ENCODE measurements at regions of chr13 and their contacts with region 1.

Region 1: GRCh38 chr13:93227878-93228642 is 1.5 kb downstream of the GPC6 start:
- DNase-seq: peak; percentile 95
- H3K4me3 ChIP-seq: peak overlapping the region; percentile 90
- H3K27ac ChIP-seq: peak overlapping the region; percentile 96
- H3K4me1 ChIP-seq: peaks cover 55% of the 10 kb centered on the region
- H3K27me3 ChIP-seq: no peaks in the 10 kb centered on the region
- CTCF ChIP-seq: peak; percentile 67

Region 2: DNA sequence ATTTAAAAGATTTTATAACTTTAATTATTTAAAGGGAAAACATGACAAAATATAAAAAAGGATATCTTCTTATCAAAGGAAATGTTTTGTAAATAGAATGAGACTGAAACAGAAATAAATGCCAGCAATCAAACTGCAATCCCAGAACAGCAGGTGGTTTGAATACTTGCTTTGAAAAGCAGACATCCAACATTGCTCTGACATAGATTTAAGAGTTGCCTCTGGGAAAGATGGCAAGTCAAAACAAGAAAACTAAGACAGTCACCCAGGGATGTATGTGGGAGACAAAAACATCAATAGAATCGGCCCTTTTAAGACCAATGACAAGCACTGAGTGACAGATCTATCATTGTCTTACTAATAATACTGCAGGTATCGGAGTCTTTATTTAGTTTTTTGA is 791.1 kb before region 1 on chr13:
- CTCF ChIA-PET with region 1: no interaction called
- POLR2A ChIA-PET with region 1: no interaction called
- intact Hi-C with region 1: no loop called
- DNase-seq: no peak
- H3K4me3 ChIP-seq: no peak overlapping the region
- H3K27ac ChIP-seq: no peak overlapping the region
- H3K4me1 ChIP-seq: no peaks in the 10 kb centered on the region
- H3K27me3 ChIP-seq: no peaks in the 10 kb centered on the region
- CTCF ChIP-seq: no peak

Region 3: DNA sequence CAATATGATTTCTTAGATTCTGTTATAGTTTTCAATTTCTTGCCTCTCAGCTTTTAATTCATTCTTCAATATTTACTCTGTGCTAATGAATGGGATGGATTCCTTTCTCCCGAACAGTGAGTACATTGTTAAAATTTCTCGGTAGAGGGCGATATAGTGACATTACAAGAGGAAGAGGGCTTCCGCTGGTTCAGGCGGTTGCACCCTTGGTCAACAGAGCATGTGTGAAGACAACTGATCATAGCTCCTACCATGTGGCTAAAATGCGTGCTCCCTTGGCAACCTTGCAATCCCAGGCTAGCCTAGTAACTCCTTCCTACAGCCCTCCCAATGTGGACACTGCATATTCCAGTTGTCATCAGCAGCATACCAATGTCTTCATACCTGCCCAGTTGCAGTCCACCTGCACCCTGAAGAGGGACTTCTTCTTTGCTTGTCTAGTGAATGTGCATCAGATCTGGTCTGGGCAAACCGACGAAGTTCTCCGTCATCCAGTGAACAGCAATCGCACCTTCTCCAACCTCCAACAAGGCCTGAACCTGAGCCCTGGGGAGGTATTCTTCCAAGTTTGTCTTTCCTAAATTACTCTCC is 654.5 kb before region 1 on chr13:
- CTCF ChIA-PET with region 1: no interaction called
- POLR2A ChIA-PET with region 1: no interaction called
- intact Hi-C with region 1: loop called (anchors 5 kb)
- DNase-seq: peak; percentile 69
- H3K4me3 ChIP-seq: no peak overlapping the region
- H3K27ac ChIP-seq: no peak overlapping the region
- H3K4me1 ChIP-seq: no peaks in the 10 kb centered on the region
- H3K27me3 ChIP-seq: no peaks in the 10 kb centered on the region
- CTCF ChIP-seq: peak; percentile 70

Region 4: GRCh38 chr13:92716749-92717148 is 511.3 kb before region 1 on chr13:
- CTCF ChIA-PET with region 1: no interaction called
- POLR2A ChIA-PET with region 1: no interaction called
- intact Hi-C with region 1: loop called (anchors 10 kb)
- DNase-seq: peak; percentile 37
- H3K4me3 ChIP-seq: no peak overlapping the region
- H3K27ac ChIP-seq: no peak overlapping the region
- H3K4me1 ChIP-seq: no peaks in the 10 kb centered on the region
- H3K27me3 ChIP-seq: no peaks in the 10 kb centered on the region
- CTCF ChIP-seq: peak; percentile 56

Region 5: DNA sequence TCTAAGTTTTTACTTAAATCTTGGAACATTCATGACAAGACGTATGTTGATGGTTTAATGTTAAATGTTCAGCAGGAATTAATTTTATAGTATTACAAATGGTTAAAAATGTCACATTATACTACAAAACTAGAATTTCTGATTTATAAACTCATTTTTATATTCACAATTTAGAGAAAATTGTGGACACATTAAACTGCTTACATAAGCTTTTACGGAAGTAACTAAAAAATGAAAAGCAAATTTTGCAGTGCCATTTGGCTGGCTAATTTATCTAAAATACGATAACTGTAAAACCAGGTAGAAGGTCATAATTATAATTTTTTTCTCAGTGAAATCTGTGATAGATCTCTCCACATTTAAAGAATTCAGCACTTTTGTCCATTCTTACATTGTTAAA is 191.7 kb before region 1 on chr13:
- CTCF ChIA-PET with region 1: no interaction called
- POLR2A ChIA-PET with region 1: interaction called, 16 read pairs
- intact Hi-C with region 1: no loop called
- DNase-seq: no peak
- H3K4me3 ChIP-seq: no peak overlapping the region
- H3K27ac ChIP-seq: no peak overlapping the region
- H3K4me1 ChIP-seq: no peaks in the 10 kb centered on the region
- H3K27me3 ChIP-seq: no peaks in the 10 kb centered on the region
- CTCF ChIP-seq: no peak

Region 6: DNA sequence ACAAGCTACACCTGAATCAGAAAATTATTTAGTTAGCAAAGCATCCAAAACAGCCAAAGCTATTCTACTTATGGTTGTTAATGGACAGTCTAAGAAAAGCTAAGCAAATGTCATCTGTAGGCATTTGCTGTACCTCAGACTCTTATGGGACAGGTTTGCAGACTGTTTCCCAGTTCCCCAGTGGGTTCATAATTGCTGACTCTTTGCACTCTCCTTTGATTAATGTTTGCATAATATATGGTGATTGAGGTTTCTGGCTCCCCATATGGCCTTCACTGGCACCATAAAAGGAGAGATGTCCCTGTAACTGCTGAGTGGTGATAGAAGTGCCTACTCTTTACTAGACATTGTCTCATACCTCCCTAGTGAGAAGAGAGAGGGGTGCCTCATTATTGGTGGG is 140.7 kb after region 1 on chr13:
- CTCF ChIA-PET with region 1: no interaction called
- POLR2A ChIA-PET with region 1: no interaction called
- intact Hi-C with region 1: loop called (anchors 5 kb)
- DNase-seq: peak; percentile 60
- H3K4me3 ChIP-seq: no peak overlapping the region
- H3K27ac ChIP-seq: peak overlapping the region; percentile 76
- H3K4me1 ChIP-seq: peaks cover 49% of the 10 kb centered on the region
- H3K27me3 ChIP-seq: no peaks in the 10 kb centered on the region
- CTCF ChIP-seq: no peak

Region 7: GRCh38 chr13:94362411-94362909 is 1134.4 kb after region 1 on chr13:
- CTCF ChIA-PET with region 1: no interaction called
- POLR2A ChIA-PET with region 1: no interaction called
- intact Hi-C with region 1: loop called (anchors 5 kb)
- DNase-seq: peak; percentile 95
- H3K4me3 ChIP-seq: no peak overlapping the region
- H3K27ac ChIP-seq: peak overlapping the region; percentile 57
- H3K4me1 ChIP-seq: peaks cover 10% of the 10 kb centered on the region
- H3K27me3 ChIP-seq: no peaks in the 10 kb centered on the region
- CTCF ChIP-seq: peak; percentile 85

Measured in A673 (cell line).